ENCODE measurements at regions of chr16 and their contacts with region 1.

Region 1: DNA sequence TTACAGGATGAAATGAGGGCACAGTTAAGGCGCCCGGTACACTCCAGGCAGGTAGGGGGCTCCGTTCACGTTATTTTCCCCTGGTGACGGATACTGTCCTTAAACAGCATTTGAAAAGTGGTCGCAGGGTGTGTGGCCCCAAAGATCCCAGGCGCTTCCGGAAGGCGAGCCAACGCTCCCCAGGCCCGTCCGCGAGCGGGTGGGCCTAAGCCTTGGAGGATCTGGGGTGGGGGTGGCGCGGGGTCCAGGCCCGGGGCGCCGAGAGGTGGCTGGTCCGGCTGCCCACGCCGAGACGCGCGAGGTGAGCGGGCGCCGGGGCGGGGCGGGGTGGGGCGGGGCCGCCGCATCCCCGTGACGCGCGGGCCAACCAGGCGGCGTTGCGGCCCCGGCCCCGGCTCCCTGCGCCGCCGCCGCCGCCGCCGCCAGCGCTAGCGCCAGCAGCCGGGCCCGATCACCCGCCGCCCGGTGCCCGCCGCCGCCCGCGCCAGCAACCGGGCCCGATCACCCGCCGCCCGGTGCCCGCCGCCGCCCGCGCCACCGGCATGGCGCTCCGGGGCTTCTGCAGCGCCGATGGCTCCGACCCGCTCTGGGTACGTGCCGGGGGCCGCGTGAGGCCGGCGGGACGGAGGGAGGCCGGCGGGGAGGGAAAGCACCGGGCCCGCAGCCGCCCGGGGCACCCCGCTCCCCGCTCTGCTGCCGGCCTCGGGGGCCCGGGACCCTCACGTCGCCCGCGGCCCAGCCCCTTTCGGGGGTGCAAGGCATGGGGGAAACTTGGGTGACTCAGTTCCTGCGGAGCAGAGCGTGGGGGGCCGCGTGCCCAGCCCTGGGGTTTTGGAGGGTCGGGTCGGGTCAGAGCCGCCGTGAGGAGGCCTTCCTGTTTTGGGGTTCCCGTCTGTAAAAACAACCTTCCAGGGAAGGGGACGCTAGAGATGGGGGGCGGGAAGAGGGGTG is at the start of gene ABCC1:
- DNase-seq: peak; percentile 23 to 56
- ATAC-seq: peak; percentile 43 to 89 (median 74)
- H3K4me3 ChIP-seq: peak within 1 kb of the TSS; percentile 61 to 94 (median 86)
- H3K27ac ChIP-seq: peak within 1 kb of the TSS; percentile 42 to 94 (median 83)
- H3K4me1 ChIP-seq: peaks cover 0 to 49% (median 32%) of the 10 kb centered on the region in 9 donors
- H3K27me3 ChIP-seq: no peaks in the 10 kb centered on the region
- CTCF ChIP-seq: peak in 1 of 9 donors; percentile 13
- total RNA-seq, gene ABCC1: 15.1 to 32.8 (median 22.0) TPM

Region 2: GRCh38 chr16:15888072-15888976 is 61.2 kb before region 1 on chr16 and contains the start of gene CEP20:
- intact Hi-C with region 1: loop called in 4 of 10 experiments (anchors 5 to 10 kb)
- DNase-seq: peak; percentile 99 to 100
- ATAC-seq: peak; percentile 100
- H3K4me3 ChIP-seq: peak within 1 kb of the TSS; percentile 62 to 99 (median 78)
- H3K27ac ChIP-seq: peak within 1 kb of the TSS; percentile 31 to 95 (median 88)
- H3K4me1 ChIP-seq: peaks cover 0 to 33% (median 28%) of the 10 kb centered on the region in 9 donors
- H3K27me3 ChIP-seq: no peaks in the 10 kb centered on the region
- CTCF ChIP-seq: peak in 5 of 9 donors; percentile 22 to 38 (median 31)
- total RNA-seq, gene CEP20: 24.1 to 42.6 (median 32.5) TPM

Region 3: DNA sequence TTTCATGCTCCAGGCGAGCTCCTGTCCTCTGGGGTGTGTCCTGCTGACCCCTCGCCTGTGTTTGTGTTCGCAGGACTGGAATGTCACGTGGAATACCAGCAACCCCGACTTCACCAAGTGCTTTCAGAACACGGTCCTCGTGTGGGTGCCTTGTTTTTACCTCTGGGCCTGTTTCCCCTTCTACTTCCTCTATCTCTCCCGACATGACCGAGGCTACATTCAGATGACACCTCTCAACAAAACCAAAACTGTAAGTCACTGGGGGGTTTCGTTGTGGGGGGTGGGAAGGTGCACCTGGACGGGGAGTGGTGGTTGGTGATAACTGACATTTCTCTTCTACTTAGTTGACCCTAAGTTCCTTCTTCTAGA is 58.2 kb after region 1 on chr16:
- intact Hi-C with region 1: loop called in 2 of 10 experiments (anchors 5 to 10 kb)
- DNase-seq: no peak
- ATAC-seq: no peak
- H3K4me3 ChIP-seq: no peak overlapping the region
- H3K27ac ChIP-seq: peak overlapping the region in 1 of 10 donors; percentile 36
- H3K4me1 ChIP-seq: peaks cover 0 to 14% (median 3%) of the 10 kb centered on the region in 9 donors
- H3K27me3 ChIP-seq: no peaks in the 10 kb centered on the region
- CTCF ChIP-seq: no peak

Region 4: GRCh38 chr16:16021988-16022682 is 72.7 kb after region 1 on chr16:
- intact Hi-C with region 1: loop called in 3 of 10 experiments (anchors 5 to 10 kb)
- DNase-seq: peak; percentile 94 to 96
- ATAC-seq: peak; percentile 97 to 99 (median 98)
- H3K4me3 ChIP-seq: peak overlapping the region in 3 of 10 donors; percentile 8 to 17 (median 10)
- H3K27ac ChIP-seq: peak overlapping the region; percentile 46 to 89 (median 78)
- H3K4me1 ChIP-seq: peaks cover 2 to 38% (median 25%) of the 10 kb centered on the region in 9 donors
- H3K27me3 ChIP-seq: no peaks in the 10 kb centered on the region
- CTCF ChIP-seq: no peak

Region 5: GRCh38 chr16:16073891-16074881 is 124.7 kb after region 1 on chr16:
- intact Hi-C with region 1: loop called in 1 of 10 experiments (anchors 10 kb)
- DNase-seq: no peak
- ATAC-seq: peak in 6 of 8 donors; percentile 46 to 63 (median 57)
- H3K4me3 ChIP-seq: no peak overlapping the region
- H3K27ac ChIP-seq: peak overlapping the region in 4 of 10 donors; percentile 15 to 69 (median 54)
- H3K4me1 ChIP-seq: peaks cover 5 to 43% (median 24%) of the 10 kb centered on the region in 9 donors
- H3K27me3 ChIP-seq: no peaks in the 10 kb centered on the region
- CTCF ChIP-seq: no peak

Region 6: DNA sequence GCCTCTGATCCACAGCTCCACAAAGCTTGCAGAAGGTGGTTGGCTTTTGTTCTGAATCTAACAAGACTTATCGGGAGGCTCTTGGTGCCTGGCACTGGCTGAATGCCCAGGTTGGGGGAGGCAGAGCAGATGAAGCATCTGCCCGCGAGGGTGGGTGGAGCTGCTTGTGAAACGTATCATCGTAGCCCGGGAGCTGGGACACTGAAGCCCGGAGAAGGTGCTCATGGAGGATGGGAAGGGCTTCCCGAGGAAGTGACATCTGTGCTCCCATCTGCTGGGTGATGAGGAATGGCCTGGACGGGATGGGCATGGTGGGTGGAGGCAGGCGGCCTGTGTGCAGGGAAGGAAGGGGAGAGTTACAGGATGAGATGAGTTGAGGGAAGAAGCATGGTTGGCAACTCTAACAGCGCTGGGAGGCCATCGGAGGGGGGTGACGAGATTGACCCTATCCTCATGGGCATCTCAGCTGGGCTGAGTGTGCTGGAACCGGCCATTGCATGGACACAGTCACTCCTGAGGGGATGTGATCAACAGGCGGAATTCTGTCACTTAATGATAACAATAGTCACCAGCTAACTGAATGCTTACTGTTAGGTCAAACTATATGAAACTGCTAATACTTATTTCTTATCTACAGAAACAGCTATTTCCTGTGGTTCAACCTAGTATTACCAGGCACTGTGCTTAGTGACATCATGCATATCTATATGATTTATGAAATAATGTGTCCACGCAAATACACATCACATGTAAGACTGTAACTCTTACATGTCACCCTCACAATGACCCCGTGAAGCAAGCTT is 171.1 kb after region 1 on chr16:
- intact Hi-C with region 1: loop called in 2 of 10 experiments (anchors 5 kb)
- DNase-seq: peak; percentile 58 to 66
- ATAC-seq: peak; percentile 58 to 87 (median 78)
- H3K4me3 ChIP-seq: no peak overlapping the region
- H3K27ac ChIP-seq: peak overlapping the region in 6 of 10 donors; percentile 2 to 35 (median 18)
- H3K4me1 ChIP-seq: peaks cover 0 to 14% (median 10%) of the 10 kb centered on the region in 9 donors
- H3K27me3 ChIP-seq: no peaks in the 10 kb centered on the region
- CTCF ChIP-seq: no peak

Measured in heart right ventricle (tissue), 16 donors.